Naive thymus-derived CD4-positive, alpha-beta T cell (primary cell): ENCODE measurements at regions of chr1 and their contacts with region 1.

Region 1: GRCh38 chr1:197924516-197925123 is 7.4 kb downstream of the LHX9 start:
- DNase-seq: peak in 1 of 9 donors; percentile 40
- ATAC-seq: peak; percentile 73
- H3K4me3 ChIP-seq: no peak overlapping the region
- H3K4me3 Mint-ChIP-seq: no peak overlapping the region
- H3K27ac ChIP-seq: no peak overlapping the region
- H3K27ac Mint-ChIP-seq: no peak overlapping the region
- H3K4me1 ChIP-seq: peaks cover 5% of the 10 kb centered on the region in 2 donors
- H3K4me1 Mint-ChIP-seq: peaks cover 17 to 29% (median 23%) of the 10 kb centered on the region in 7 donors
- H3K27me3 ChIP-seq: peaks cover 17 to 32% of the 10 kb centered on the region in 2 donors
- H3K27me3 Mint-ChIP-seq: peaks cover 74 to 95% (median 76%) of the 10 kb centered on the region in 5 donors

Region 2: GRCh38 chr1:197327776-197328364 is 596.8 kb before region 1 on chr1:
- CTCF ChIA-PET with region 1: no interaction called
- POLR2A ChIA-PET with region 1: no interaction called
- intact Hi-C with region 1: loop called in 1 of 2 experiments (anchors 1 kb)
- DNase-seq: peak in 4 of 9 donors; percentile 11 to 23 (median 17)
- ATAC-seq: no peak
- H3K4me3 ChIP-seq: no peak overlapping the region
- H3K4me3 Mint-ChIP-seq: no peak overlapping the region
- H3K27ac ChIP-seq: no peak overlapping the region
- H3K27ac Mint-ChIP-seq: no peak overlapping the region
- H3K4me1 ChIP-seq: no peaks in the 10 kb centered on the region
- H3K4me1 Mint-ChIP-seq: no peaks in the 10 kb centered on the region
- H3K27me3 ChIP-seq: no peaks in the 10 kb centered on the region
- H3K27me3 Mint-ChIP-seq: peaks cover 0 to 3% (median 0%) of the 10 kb centered on the region in 5 donors

Region 3: DNA sequence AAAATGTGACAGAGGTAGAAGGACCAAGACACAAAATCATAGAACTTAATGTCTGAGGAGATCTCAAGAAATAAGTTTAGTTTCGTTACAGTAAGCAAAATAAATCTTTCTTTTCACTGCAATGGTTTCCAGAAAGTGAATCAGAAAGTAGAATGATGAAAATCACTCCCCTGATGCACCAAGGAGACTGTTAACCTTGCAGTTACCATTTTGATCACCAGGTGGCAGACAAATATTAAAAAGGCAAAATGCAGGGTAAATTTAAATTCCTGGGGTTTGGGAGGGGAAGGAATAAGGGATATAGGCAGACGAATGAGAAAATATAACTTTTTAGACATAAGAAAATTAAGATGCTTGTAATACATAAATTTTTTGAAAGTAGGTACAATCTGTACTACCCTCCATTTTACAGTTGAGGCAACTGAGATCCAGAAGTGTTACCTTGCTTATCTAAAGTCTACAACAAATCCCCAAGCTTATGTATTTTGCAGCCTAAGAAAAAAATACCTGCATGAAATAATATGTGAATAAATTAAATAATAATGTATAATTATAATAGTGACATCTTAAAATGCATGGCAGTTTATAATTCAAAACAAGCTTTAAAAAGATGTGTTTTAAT is 403.4 kb before region 1 on chr1:
- CTCF ChIA-PET with region 1: interaction called, 8 read pairs
- POLR2A ChIA-PET with region 1: no interaction called
- intact Hi-C with region 1: loop called (anchors 1 kb)
- DNase-seq: peak in 7 of 9 donors; percentile 2 to 34 (median 24)
- ATAC-seq: no peak
- H3K4me3 ChIP-seq: no peak overlapping the region
- H3K4me3 Mint-ChIP-seq: no peak overlapping the region
- H3K27ac ChIP-seq: no peak overlapping the region
- H3K27ac Mint-ChIP-seq: no peak overlapping the region
- H3K4me1 ChIP-seq: no peaks in the 10 kb centered on the region
- H3K4me1 Mint-ChIP-seq: peaks cover 0 to 5% (median 0%) of the 10 kb centered on the region in 7 donors
- H3K27me3 ChIP-seq: no peaks in the 10 kb centered on the region
- H3K27me3 Mint-ChIP-seq: no peaks in the 10 kb centered on the region

Region 4: GRCh38 chr1:197614916-197615692 is 309.5 kb before region 1 on chr1:
- CTCF ChIA-PET with region 1: interaction called, 15 read pairs
- POLR2A ChIA-PET with region 1: no interaction called
- intact Hi-C with region 1: loop called (anchors 1 to 2 kb)
- DNase-seq: peak in 5 of 9 donors; percentile 0 to 27 (median 8)
- ATAC-seq: peak; percentile 55
- H3K4me3 ChIP-seq: no peak overlapping the region
- H3K4me3 Mint-ChIP-seq: no peak overlapping the region
- H3K27ac ChIP-seq: no peak overlapping the region
- H3K27ac Mint-ChIP-seq: peak overlapping the region in 1 of 9 donors; percentile 65
- H3K4me1 ChIP-seq: no peaks in the 10 kb centered on the region
- H3K4me1 Mint-ChIP-seq: peaks cover 0 to 4% (median 0%) of the 10 kb centered on the region in 7 donors
- H3K27me3 ChIP-seq: no peaks in the 10 kb centered on the region
- H3K27me3 Mint-ChIP-seq: no peaks in the 10 kb centered on the region

Region 5: DNA sequence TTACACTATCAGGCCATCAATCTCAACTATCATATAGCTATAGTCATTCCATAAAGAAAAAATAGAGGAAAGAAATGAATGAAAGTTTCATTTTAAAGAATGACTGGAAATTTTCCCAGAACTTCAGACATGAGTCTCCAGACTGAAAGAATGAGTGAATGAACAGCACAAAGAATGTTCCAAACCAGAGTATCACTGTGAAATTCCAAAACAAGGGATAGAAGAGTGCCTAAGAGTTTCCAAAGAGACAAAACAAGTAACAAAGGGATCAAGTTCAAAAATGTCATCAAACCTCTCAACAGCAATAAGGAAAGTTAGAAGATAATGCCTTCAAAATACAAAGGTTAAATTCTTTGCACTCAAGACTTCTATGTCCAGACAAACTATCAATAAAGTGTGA is 264.2 kb before region 1 on chr1:
- CTCF ChIA-PET with region 1: no interaction called
- POLR2A ChIA-PET with region 1: no interaction called
- intact Hi-C with region 1: no loop called
- DNase-seq: no peak
- ATAC-seq: no peak
- H3K4me3 ChIP-seq: no peak overlapping the region
- H3K4me3 Mint-ChIP-seq: no peak overlapping the region
- H3K27ac ChIP-seq: no peak overlapping the region
- H3K27ac Mint-ChIP-seq: no peak overlapping the region
- H3K4me1 ChIP-seq: peaks cover 0 to 6% of the 10 kb centered on the region in 2 donors
- H3K4me1 Mint-ChIP-seq: peaks cover 0 to 25% (median 14%) of the 10 kb centered on the region in 7 donors
- H3K27me3 ChIP-seq: no peaks in the 10 kb centered on the region
- H3K27me3 Mint-ChIP-seq: no peaks in the 10 kb centered on the region

Region 6: DNA sequence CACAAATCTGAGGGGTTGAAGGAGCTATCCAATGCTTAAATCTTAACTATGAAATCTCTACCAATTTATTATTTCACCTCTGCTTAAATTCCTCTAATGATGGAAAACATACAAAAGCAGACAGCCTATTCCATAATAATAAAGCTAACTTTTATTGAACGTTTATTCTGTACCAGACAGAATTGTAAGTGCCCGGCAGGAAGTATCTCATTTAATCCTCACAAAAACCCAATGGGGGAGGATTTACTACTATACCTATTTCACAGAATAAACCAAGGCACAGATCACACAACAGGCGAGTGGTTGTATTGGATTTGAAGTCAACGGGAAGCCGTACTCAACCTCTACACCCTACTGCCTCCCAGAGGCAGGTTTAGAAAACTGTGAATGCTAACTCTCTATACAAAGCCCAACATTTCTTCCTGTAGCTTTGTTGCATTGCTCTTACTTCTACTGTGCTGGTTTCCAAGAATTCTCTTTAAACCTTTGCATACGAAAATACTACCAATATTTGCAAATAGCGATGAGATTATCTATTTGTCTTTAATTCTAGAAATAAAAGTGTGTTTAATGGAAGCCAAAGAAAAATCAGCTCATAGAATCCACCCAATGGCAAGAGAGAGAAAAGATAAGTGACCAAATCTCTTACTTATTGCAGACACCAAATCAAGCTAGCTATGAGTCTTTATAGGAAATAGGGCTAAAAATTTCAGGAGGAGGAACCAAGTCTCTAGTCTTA is 55.7 kb before region 1 on chr1:
- CTCF ChIA-PET with region 1: interaction called, 9 read pairs
- POLR2A ChIA-PET with region 1: no interaction called
- intact Hi-C with region 1: loop called in 1 of 2 experiments (anchors 1 kb)
- DNase-seq: peak in 7 of 9 donors; percentile 17 to 62 (median 41)
- ATAC-seq: peak; percentile 86
- H3K4me3 ChIP-seq: no peak overlapping the region
- H3K4me3 Mint-ChIP-seq: no peak overlapping the region
- H3K27ac ChIP-seq: no peak overlapping the region
- H3K27ac Mint-ChIP-seq: no peak overlapping the region
- H3K4me1 ChIP-seq: no peaks in the 10 kb centered on the region
- H3K4me1 Mint-ChIP-seq: peaks cover 0 to 2% (median 0%) of the 10 kb centered on the region in 7 donors
- H3K27me3 ChIP-seq: no peaks in the 10 kb centered on the region
- H3K27me3 Mint-ChIP-seq: peaks cover 0 to 27% (median 0%) of the 10 kb centered on the region in 5 donors

Region 7: GRCh38 chr1:198275597-198275996 is 351.0 kb after region 1 on chr1:
- CTCF ChIA-PET with region 1: no interaction called
- POLR2A ChIA-PET with region 1: no interaction called
- intact Hi-C with region 1: loop called in 1 of 2 experiments (anchors 10 kb)
- DNase-seq: peak in 1 of 9 donors; percentile 14
- ATAC-seq: no peak
- H3K4me3 ChIP-seq: no peak overlapping the region
- H3K4me3 Mint-ChIP-seq: no peak overlapping the region
- H3K27ac ChIP-seq: no peak overlapping the region
- H3K27ac Mint-ChIP-seq: no peak overlapping the region
- H3K4me1 ChIP-seq: no peaks in the 10 kb centered on the region
- H3K4me1 Mint-ChIP-seq: peaks cover 6 to 29% (median 14%) of the 10 kb centered on the region in 7 donors
- H3K27me3 ChIP-seq: no peaks in the 10 kb centered on the region
- H3K27me3 Mint-ChIP-seq: no peaks in the 10 kb centered on the region

Region 8: DNA sequence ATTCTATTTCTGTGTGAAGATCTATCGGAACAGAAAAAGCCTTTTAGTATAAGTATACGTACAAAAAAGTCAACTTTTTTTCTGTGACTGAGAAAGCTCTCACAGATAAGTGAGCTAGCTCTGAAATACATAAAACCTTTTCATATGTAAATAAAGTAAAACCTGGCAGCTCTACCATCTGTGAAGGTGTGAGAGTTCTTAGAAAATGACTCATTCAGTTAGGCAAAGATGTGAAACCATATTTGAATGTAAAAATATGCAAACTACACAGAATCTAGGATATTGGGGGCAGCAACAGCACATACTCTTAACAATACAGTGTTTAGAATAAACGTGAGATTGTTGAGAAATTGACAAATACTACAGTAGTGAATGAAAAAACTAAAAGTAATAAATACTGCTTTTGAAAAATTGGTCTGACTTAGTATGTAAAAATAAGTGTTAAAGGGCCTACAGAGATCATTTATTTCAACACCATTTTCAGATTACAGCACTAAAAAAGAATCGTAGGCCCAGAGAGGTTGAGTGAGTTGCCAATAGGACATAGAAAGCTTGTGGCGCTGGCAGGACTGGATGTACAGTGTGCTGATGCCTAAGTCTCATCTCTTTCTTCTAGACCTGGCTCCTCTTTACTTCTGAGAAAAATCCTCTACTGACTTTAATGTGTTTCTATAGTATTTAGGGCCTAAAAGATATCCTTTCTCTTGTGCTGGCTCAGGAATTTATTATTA is 596.1 kb after region 1 on chr1:
- CTCF ChIA-PET with region 1: no interaction called
- POLR2A ChIA-PET with region 1: no interaction called
- intact Hi-C with region 1: no loop called
- DNase-seq: peak in 3 of 9 donors; percentile 11 to 27 (median 18)
- ATAC-seq: peak; percentile 66
- H3K4me3 ChIP-seq: peak overlapping the region; percentile 44
- H3K4me3 Mint-ChIP-seq: peak overlapping the region; percentile 65 to 79 (median 71)
- H3K27ac ChIP-seq: peak overlapping the region; percentile 81
- H3K27ac Mint-ChIP-seq: peak overlapping the region; percentile 48 to 95 (median 93)
- H3K4me1 ChIP-seq: peaks cover 40 to 48% of the 10 kb centered on the region in 2 donors
- H3K4me1 Mint-ChIP-seq: peaks cover 30 to 77% (median 69%) of the 10 kb centered on the region in 7 donors
- H3K27me3 ChIP-seq: no peaks in the 10 kb centered on the region
- H3K27me3 Mint-ChIP-seq: no peaks in the 10 kb centered on the region